A549 (cell line): ENCODE measurements at regions of chr20 and their contacts with region 1.

Region 1: GRCh38 chr20:32031007-32031958 is 20.8 kb upstream of the HCK start:
- DNase-seq: peak; percentile 86 to 89
- ATAC-seq: peak; percentile 90 to 99
- H3K4me3 ChIP-seq: peak overlapping the region; percentile 24
- H3K27ac ChIP-seq: peak overlapping the region in 1 of 2 experiments; percentile 64; a peak in 4 of 6 replicates
- H3K4me1 ChIP-seq: no peaks in the 10 kb centered on the region; the same call in 1 of the 3 replicates
- CTCF ChIP-seq: peak; percentile 99
- EP300 ChIP-seq: no peak
- POLR2A ChIP-seq: no peak
- RAD21 ChIP-seq: peak; percentile 88 to 90

Region 2: DNA sequence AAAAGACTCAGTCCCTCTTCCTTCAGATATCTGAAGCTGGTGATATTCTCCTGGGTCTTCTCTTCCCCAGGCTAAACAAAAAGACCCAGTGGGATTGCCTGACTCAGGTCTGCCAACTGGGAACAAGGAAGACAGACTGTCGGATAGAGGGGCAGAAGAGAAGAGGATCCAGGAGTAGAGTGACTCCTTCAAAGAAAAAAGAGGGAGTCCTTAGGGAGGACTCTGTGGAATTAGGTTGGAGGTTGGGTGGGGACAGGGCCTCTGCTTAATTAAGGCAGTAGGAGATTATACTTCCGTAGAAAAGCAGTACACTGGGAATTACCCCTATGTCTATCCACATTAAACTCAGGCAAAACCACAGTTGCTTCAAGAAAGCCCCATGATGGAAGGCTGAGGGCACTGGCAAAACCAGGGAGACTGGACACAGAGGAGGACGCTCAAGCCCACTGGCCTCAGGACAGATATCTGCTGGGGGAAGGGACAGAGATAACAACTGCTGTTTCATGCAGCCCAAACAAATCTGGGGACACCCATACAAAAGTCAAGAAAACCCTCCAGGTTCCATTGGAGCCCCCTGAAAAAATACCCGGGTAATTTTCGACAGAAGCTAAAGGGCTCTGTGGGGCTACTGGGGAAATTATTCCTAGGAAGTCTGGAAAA is 314.3 kb before region 1 on chr20:
- CTCF ChIA-PET with region 1: no interaction called
- POLR2A ChIA-PET with region 1: no interaction called
- DNase-seq: no peak
- ATAC-seq: no peak
- H3K4me3 ChIP-seq: peak overlapping the region; percentile 68
- H3K27ac ChIP-seq: peak overlapping the region; percentile 95 to 96
- H3K4me1 ChIP-seq: peaks cover 74% of the 10 kb centered on the region
- CTCF ChIP-seq: no peak
- EP300 ChIP-seq: no peak
- POLR2A ChIP-seq: no peak
- RAD21 ChIP-seq: no peak

Region 3: DNA sequence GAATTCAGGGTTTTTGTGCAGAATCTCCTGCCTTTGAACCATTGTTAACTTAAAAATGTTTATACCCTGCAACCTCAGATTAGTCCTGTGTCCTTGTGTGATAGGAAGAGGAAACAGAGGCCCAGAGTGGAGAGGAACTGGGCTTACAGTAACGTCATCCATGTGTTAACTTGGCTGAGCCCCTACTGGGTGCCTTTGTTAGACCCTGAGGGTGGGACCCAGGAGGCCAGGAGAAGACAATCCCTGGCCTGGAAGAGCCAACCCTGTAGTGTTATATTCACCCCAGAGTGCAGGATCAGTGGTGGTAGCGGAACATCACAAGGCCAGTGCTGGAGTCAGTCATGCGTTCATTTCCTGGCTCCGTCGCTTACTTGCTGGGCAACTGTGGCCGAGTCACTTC is 201.6 kb before region 1 on chr20:
- CTCF ChIA-PET with region 1: interaction called, 117 read pairs
- POLR2A ChIA-PET with region 1: no interaction called
- DNase-seq: no peak
- ATAC-seq: no peak
- H3K4me3 ChIP-seq: no peak overlapping the region
- H3K27ac ChIP-seq: no peak overlapping the region
- H3K4me1 ChIP-seq: peaks cover 6% of the 10 kb centered on the region; the same call in 1 of the 3 replicates
- CTCF ChIP-seq: no peak
- EP300 ChIP-seq: no peak
- POLR2A ChIP-seq: no peak
- RAD21 ChIP-seq: no peak

Region 4: DNA sequence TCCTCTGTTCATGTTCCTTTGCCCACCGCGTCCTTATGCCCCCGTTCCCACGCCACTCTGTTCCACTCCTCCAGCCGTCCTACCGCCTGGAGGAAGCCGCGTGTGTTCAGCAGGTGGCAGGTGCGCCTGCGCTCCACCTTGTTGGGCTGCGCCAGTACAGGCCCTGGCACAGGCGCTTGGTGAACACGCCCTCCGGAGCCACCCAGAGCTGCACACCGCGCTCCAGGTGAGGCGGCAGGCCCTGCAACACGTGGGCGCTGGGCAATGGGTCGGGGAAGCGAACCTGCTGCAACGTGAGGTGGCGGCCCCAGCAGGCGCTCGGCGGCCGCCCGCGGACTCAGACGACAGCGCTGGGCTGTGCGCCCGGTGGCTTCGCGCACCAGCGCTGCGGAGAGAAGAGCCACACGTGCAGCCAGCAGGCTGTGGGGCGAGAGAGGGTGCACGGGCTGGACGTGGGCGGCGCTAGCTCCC is 181.8 kb before region 1 on chr20:
- CTCF ChIA-PET with region 1: interaction called, 193 read pairs
- POLR2A ChIA-PET with region 1: no interaction called
- DNase-seq: no peak
- ATAC-seq: no peak
- H3K4me3 ChIP-seq: no peak overlapping the region
- H3K27ac ChIP-seq: no peak overlapping the region
- H3K4me1 ChIP-seq: peaks cover 17% of the 10 kb centered on the region
- CTCF ChIP-seq: no peak
- EP300 ChIP-seq: no peak
- POLR2A ChIP-seq: no peak
- RAD21 ChIP-seq: no peak

Region 5: GRCh38 chr20:31908016-31908415 is 123.3 kb before region 1 on chr20:
- CTCF ChIA-PET with region 1: no interaction called
- POLR2A ChIA-PET with region 1: no interaction called
- DNase-seq: no peak
- ATAC-seq: no peak
- H3K4me3 ChIP-seq: no peak overlapping the region
- H3K27ac ChIP-seq: no peak overlapping the region
- H3K4me1 ChIP-seq: no peaks in the 10 kb centered on the region
- CTCF ChIP-seq: no peak
- EP300 ChIP-seq: no peak
- POLR2A ChIP-seq: no peak
- RAD21 ChIP-seq: no peak

Region 6: GRCh38 chr20:31951530-31952453 is 79.5 kb before region 1 on chr20 and contains the start of gene PDRG1:
- CTCF ChIA-PET with region 1: interaction called, 25 read pairs
- POLR2A ChIA-PET with region 1: no interaction called
- DNase-seq: peak; percentile 72 to 96
- ATAC-seq: peak; percentile 89 to 99
- H3K4me3 ChIP-seq: peak within 1 kb of the TSS; percentile 100
- H3K27ac ChIP-seq: peak within 1 kb of the TSS; percentile 92 to 97
- H3K4me1 ChIP-seq: peaks cover 8% of the 10 kb centered on the region; the same call in 2 of the 3 replicates
- CTCF ChIP-seq: peak; percentile 96
- EP300 ChIP-seq: no peak
- POLR2A ChIP-seq: peak; percentile 85
- RAD21 ChIP-seq: peak; percentile 77 to 89
- polyA plus RNA-seq, gene PDRG1: 15.3 and 20.7 TPM in 2 replicates

Region 7: DNA sequence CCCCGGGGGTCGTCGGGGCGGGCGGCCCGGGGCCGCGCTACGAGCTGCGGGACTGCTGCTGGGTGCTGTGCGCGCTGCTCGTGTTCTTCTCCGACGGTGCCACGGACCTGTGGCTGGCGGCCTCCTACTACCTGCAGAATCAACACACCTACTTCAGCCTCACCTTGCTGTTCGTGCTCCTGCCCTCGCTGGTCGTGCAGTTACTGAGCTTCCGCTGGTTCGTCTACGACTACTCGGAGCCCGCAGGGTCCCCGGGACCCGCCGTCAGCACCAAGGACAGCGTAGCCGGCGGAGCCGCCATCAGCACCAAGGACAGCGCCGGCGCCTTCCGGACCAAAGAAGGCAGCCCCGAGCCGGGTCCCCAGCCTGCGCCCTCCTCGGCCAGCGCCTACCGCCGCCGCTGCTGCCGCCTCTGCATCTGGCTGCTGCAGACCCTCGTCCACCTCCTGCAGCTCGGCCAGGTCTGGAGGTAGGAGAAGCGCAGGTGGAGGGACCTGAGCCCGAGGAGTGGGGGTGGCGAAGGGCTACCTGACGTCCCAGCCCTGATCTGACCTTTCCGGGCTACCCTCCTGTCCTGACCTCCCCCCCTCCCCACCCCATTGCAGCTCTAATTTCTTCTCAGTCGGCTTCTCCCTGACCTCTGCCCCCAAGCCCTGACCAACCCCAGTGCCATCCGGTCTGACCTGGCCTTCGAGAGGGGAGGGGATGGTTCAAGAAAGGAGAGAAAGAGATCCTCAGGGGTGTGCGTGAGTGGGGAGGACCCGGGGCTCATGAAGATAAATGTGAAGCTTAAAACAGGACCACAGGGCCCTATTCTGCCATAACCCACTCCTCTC is 62.8 kb before region 1 on chr20:
- CTCF ChIA-PET with region 1: interaction called, 15 read pairs
- POLR2A ChIA-PET with region 1: no interaction called
- DNase-seq: peak; percentile 44 to 81
- ATAC-seq: peak; percentile 82 to 89
- H3K4me3 ChIP-seq: no peak overlapping the region; the same call in 2 of the 3 replicates
- H3K27ac ChIP-seq: no peak overlapping the region
- H3K4me1 ChIP-seq: peaks cover 6% of the 10 kb centered on the region; the same call in 2 of the 3 replicates
- CTCF ChIP-seq: no peak
- EP300 ChIP-seq: no peak
- POLR2A ChIP-seq: no peak
- RAD21 ChIP-seq: no peak

Region 8: DNA sequence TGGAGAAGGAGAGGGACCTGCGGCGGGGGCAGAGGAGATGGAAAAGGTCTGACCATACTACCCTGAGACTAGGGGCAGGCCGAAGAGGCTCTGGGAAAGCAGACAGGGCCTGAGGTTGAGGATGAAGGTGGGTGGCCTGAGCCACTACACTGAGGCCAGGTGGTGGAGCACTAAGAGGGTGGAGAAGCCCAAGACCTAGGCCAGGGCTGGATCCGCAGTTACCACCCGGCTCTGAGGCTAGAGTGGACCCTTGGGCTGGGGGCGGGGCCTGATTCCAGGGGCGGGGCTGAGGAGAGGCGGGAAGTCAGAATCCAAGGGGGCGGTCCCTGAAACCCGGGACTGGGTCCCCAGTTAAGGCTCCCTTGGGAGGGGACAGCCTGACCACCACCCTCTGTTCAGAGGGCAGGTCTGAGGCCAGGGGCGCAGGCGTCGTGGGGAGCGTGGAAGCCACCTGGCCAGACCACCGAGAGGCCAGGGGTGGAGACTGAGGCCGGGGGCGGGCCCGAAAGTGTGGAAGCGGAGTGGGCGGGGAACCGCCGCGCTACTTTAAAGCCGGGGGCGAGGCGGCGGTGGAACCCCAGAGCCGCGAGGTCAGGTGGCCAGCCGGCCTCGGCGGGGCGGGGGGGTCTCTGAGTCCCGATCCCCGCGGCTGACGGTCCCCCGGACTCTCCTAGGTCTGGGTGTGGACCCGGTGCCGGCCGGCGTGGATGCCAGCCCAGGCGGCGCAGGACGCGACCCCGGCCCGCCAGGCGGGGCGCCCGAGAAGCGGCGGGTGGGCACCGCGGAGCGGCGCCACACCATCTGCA is 12.8 kb before region 1 on chr20:
- CTCF ChIA-PET with region 1: interaction called, 69 read pairs
- POLR2A ChIA-PET with region 1: no interaction called
- DNase-seq: peak; percentile 44 to 77
- ATAC-seq: peak; percentile 78 to 91
- H3K4me3 ChIP-seq: peak overlapping the region; percentile 68
- H3K27ac ChIP-seq: peak overlapping the region; percentile 38 to 70; a peak in 4 of 6 replicates
- H3K4me1 ChIP-seq: peaks cover 4% of the 10 kb centered on the region; the same call in 1 of the 3 replicates
- CTCF ChIP-seq: no peak
- EP300 ChIP-seq: no peak
- POLR2A ChIP-seq: peak; percentile 21; the same call in 1 of the 2 replicates
- RAD21 ChIP-seq: no peak

Region 9: GRCh38 chr20:32091888-32092346 is 60.6 kb after region 1 on chr20:
- CTCF ChIA-PET with region 1: interaction called, 106 read pairs
- POLR2A ChIA-PET with region 1: no interaction called
- DNase-seq: peak; percentile 63 to 77
- ATAC-seq: peak; percentile 70 to 94
- H3K4me3 ChIP-seq: no peak overlapping the region
- H3K27ac ChIP-seq: 0 out of 6 replicates have a peak overlapping the region, but pooled peaks of 1 of the 2 experiments have one; percentile 20
- H3K4me1 ChIP-seq: no peaks in the 10 kb centered on the region
- CTCF ChIP-seq: peak; percentile 83
- EP300 ChIP-seq: no peak
- POLR2A ChIP-seq: no peak
- RAD21 ChIP-seq: peak; percentile 70 to 71

Region 10: GRCh38 chr20:32152421-32153155 is 121.3 kb after region 1 on chr20:
- CTCF ChIA-PET with region 1: no interaction called
- POLR2A ChIA-PET with region 1: no interaction called
- DNase-seq: no peak
- ATAC-seq: no peak
- H3K4me3 ChIP-seq: no peak overlapping the region
- H3K27ac ChIP-seq: no peak overlapping the region
- H3K4me1 ChIP-seq: peaks cover 8% of the 10 kb centered on the region; the same call in 2 of the 3 replicates
- CTCF ChIP-seq: no peak
- EP300 ChIP-seq: no peak
- POLR2A ChIP-seq: no peak
- RAD21 ChIP-seq: no peak